ENCODE measurements at regions of chr2 and their contacts with region 1.

Region 1: GRCh38 chr2:65040400-65041261 is 15.6 kb upstream of the CEP68 start:
- DNase-seq: no peak
- H3K4me3 ChIP-seq: peak overlapping the region; percentile 7
- CTCF ChIP-seq: peak; percentile 93

Region 2: DNA sequence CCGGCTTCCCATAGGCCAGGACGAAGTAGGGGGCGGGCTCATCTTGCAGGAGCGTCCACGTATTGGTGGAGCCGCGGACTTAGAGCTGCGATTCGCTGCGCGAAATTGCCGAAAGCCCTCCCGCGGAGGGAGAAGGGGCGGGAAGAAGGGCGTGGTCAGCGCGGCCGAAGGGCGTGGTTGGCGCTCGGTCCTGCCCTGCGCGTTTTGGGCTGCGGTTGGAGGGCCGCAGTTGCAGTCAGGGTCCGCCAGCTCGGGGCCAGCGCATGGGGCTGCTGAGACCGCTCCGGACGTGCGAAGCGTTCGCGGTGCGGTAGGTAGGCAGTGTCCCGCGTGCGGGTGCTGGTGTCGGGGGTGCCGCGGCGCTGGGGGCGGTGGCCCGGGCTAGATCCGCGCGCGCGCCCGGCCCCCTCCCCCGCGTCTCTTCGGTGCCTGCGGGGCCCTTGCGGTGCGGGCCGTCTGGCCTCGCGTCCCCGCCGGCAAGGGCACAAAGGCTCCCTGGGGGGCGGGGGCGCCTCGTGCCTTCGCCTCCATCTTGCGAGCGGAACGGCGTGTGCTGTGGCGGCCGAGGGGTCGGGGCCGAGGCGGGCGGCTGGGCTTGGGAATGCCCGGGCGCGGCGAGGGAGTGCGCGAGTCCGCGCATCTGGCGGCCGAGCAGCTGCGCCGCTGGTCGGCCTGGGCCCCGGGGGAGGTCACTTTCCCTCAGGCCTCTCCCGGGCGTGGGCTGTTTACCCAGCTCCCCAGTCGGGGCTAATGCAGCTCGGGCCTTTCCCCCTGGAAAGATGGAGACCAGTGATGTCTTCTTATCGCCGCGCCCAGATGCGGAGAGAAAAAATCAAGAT is 15.8 kb after region 1 on chr2 and contains the start of gene CEP68:
- CTCF ChIA-PET with region 1: interaction called, 18 read pairs
- POLR2A ChIA-PET with region 1: no interaction called
- DNase-seq: peak; percentile 75
- H3K4me3 ChIP-seq: peak within 1 kb of the TSS; percentile 83
- CTCF ChIP-seq: no peak

Region 3: GRCh38 chr2:65514555-65515195 is 474.0 kb after region 1 on chr2:
- CTCF ChIA-PET with region 1: no interaction called
- POLR2A ChIA-PET with region 1: no interaction called
- DNase-seq: peak; percentile 14
- H3K4me3 ChIP-seq: no peak overlapping the region
- CTCF ChIP-seq: no peak

Measured in AG04449 (cell line).